ENCODE measurements at regions of chrX and their contacts with region 1.

Region 1: GRCh38 chrX:48891402-48892288 is 5.9 kb downstream of the TIMM17B start:
- DNase-seq: peak; percentile 72
- H3K4me3 Mint-ChIP-seq: peak overlapping the region; percentile 70
- H3K27ac Mint-ChIP-seq: peak overlapping the region; percentile 52
- H3K4me1 Mint-ChIP-seq: peaks cover 15% of the 10 kb centered on the region
- H3K27me3 Mint-ChIP-seq: no peaks in the 10 kb centered on the region

Region 2: GRCh38 chrX:48548871-48549270 is 342.8 kb before region 1 on chrX:
- intact Hi-C with region 1: no loop called
- DNase-seq: no peak
- H3K4me3 Mint-ChIP-seq: no peak overlapping the region
- H3K27ac Mint-ChIP-seq: no peak overlapping the region
- H3K4me1 Mint-ChIP-seq: no peaks in the 10 kb centered on the region
- H3K27me3 Mint-ChIP-seq: no peaks in the 10 kb centered on the region

Region 3: GRCh38 chrX:48648336-48648751 is 243.3 kb before region 1 on chrX:
- intact Hi-C with region 1: loop called (anchors 2 kb)
- DNase-seq: no peak
- H3K4me3 Mint-ChIP-seq: no peak overlapping the region
- H3K27ac Mint-ChIP-seq: no peak overlapping the region
- H3K4me1 Mint-ChIP-seq: peaks cover 5% of the 10 kb centered on the region
- H3K27me3 Mint-ChIP-seq: no peaks in the 10 kb centered on the region

Region 4: GRCh38 chrX:48676106-48676892 is 215.3 kb before region 1 on chrX:
- intact Hi-C with region 1: loop called (anchors 1 kb)
- DNase-seq: peak; percentile 87
- H3K4me3 Mint-ChIP-seq: peak overlapping the region; percentile 86
- H3K27ac Mint-ChIP-seq: peak overlapping the region; percentile 88
- H3K4me1 Mint-ChIP-seq: peaks cover 20% of the 10 kb centered on the region
- H3K27me3 Mint-ChIP-seq: no peaks in the 10 kb centered on the region

Region 5: DNA sequence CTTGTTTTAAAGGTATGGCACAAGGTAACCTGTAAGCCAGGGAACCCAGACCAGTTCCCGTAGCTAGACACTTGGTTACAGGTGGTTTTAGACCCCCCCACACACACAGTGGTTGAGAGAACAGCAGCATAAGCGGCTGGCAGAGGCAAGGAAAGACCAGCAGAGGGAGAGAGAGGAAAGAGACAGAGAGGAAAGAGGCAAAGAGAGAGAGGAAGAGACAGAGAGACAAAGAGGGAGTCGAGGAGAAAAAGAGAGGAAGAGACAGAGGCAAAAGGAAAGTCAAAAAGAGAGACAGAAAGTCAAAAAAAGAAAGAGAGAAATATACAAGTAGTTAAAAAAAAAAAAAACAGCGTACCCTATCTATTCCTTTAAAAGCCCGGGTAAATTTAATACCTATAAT is 36.7 kb before region 1 on chrX:
- intact Hi-C with region 1: loop called (anchors 2 kb)
- DNase-seq: no peak
- H3K4me3 Mint-ChIP-seq: no peak overlapping the region
- H3K27ac Mint-ChIP-seq: no peak overlapping the region
- H3K4me1 Mint-ChIP-seq: no peaks in the 10 kb centered on the region
- H3K27me3 Mint-ChIP-seq: peaks cover 9% of the 10 kb centered on the region

Region 6: GRCh38 chrX:48911412-48912182 is 20.0 kb after region 1 on chrX and contains the start of gene SLC35A2:
- intact Hi-C with region 1: loop called (anchors 1 kb)
- DNase-seq: peak; percentile 85
- H3K4me3 Mint-ChIP-seq: peak within 1 kb of the TSS; percentile 98
- H3K27ac Mint-ChIP-seq: peak within 1 kb of the TSS; percentile 93
- H3K4me1 Mint-ChIP-seq: peaks cover 35% of the 10 kb centered on the region
- H3K27me3 Mint-ChIP-seq: no peaks in the 10 kb centered on the region
- total RNA-seq, gene SLC35A2: 24.9 and 26.5 TPM in 2 replicates

Region 7: GRCh38 chrX:48972220-48973167 is 80.8 kb after region 1 on chrX:
- intact Hi-C with region 1: no loop called
- DNase-seq: no peak
- H3K4me3 Mint-ChIP-seq: no peak overlapping the region
- H3K27ac Mint-ChIP-seq: no peak overlapping the region
- H3K4me1 Mint-ChIP-seq: peaks cover 15% of the 10 kb centered on the region
- H3K27me3 Mint-ChIP-seq: no peaks in the 10 kb centered on the region

Region 8: GRCh38 chrX:49073601-49074571 is 182.2 kb after region 1 on chrX and contains the start of gene PRAF2:
- intact Hi-C with region 1: loop called (anchors 1 kb)
- DNase-seq: peak; percentile 84
- H3K4me3 Mint-ChIP-seq: peak within 1 kb of the TSS; percentile 84
- H3K27ac Mint-ChIP-seq: peak within 1 kb of the TSS; percentile 74
- H3K4me1 Mint-ChIP-seq: peaks cover 12% of the 10 kb centered on the region
- H3K27me3 Mint-ChIP-seq: no peaks in the 10 kb centered on the region
- total RNA-seq, gene PRAF2: 14.9 and 15.4 TPM in 2 replicates